AG04450 (cell line): ENCODE measurements at regions of chr10 and their contacts with region 1.

Region 1: GRCh38 chr10:2978111-2978510 is 89.2 kb upstream of the PFKP start:
- DNase-seq: no peak
- H3K4me3 ChIP-seq: no peak overlapping the region
- H3K27ac ChIP-seq: no peak overlapping the region
- H3K27me3 ChIP-seq: no peaks in the 10 kb centered on the region
- CTCF ChIP-seq: peak; percentile 76

Region 2: DNA sequence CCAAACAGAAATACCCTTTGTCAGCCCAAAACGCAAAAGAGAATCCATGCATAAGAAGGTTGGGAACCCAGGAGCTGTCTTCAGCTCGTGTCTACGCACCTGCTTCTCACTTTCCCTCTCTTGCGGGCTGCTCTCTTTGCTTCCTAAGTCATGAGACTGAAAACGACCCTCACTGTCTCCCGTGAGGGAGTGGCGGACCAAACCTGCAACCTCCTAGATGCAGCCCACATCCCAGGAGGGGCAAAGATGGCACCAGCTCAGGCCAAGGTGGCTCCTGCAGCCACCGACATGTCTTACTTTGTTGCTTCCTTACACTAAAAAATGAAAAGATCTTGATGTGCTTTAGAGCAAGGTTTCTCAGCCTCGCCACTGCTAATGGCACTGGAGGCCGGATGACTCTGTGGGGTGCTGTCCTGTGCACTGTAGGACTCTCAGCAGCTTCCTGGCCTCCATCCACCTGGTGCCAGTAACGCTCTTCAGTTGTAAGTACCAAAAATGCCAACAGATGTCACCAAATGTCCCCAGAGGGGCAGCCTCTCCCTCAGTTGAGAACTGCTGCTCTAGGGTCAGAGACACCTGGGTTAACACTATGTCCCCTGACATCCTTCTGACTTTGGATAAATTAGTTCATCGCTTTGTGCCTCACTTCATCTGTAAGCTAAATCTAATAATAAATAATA is 90.6 kb before region 1 on chr10:
- CTCF ChIA-PET with region 1: no interaction called
- POLR2A ChIA-PET with region 1: no interaction called
- DNase-seq: no peak
- H3K4me3 ChIP-seq: no peak overlapping the region
- H3K27ac ChIP-seq: no peak overlapping the region
- H3K27me3 ChIP-seq: no peaks in the 10 kb centered on the region
- CTCF ChIP-seq: no peak

Region 3: GRCh38 chr10:2938869-2939268 is 39.2 kb before region 1 on chr10:
- CTCF ChIA-PET with region 1: interaction called, 30 read pairs
- POLR2A ChIA-PET with region 1: no interaction called
- DNase-seq: no peak
- H3K4me3 ChIP-seq: no peak overlapping the region
- H3K27ac ChIP-seq: no peak overlapping the region
- H3K27me3 ChIP-seq: peaks cover 14% of the 10 kb centered on the region
- CTCF ChIP-seq: peak; percentile 37

Region 4: DNA sequence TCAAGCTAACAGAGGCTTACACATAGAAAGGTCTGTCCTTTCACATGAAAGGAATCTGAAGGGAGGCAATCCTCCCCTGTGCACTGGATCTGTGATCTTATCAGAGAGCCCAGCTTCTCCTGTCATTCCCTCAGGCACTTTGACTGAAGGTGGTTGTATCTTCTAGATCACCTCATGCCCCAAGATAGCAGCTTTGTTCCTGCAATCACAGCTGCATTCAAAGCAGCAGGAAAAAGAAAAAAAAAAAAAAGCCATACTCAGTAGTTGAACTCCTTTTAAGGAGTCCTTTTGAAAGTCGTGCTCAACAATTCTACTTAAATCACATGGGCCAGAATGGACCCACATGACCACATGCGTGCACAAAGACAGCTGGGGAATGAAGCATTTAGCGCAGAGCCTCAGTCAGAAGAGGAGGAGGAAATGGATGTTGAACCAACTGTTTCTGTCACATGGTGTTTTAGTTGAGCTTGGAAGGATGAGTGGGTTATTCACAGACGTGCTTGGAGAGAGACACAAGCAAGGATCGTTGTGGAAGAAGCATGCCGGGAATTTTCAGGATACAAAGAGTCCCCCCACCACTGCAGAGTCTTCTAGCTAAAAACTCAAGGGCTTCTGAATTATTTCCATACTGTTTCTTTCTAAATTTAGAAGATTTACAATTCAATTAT is 76.2 kb after region 1 on chr10:
- CTCF ChIA-PET with region 1: no interaction called
- POLR2A ChIA-PET with region 1: no interaction called
- DNase-seq: no peak
- H3K4me3 ChIP-seq: no peak overlapping the region
- H3K27ac ChIP-seq: peak overlapping the region; percentile 33
- H3K27me3 ChIP-seq: no peaks in the 10 kb centered on the region
- CTCF ChIP-seq: no peak